ENCODE measurements at regions of chr9 and their contacts with region 1.

Region 1: GRCh38 chr9:120985810-120986222 is 59.2 kb upstream of the TRAF1 start:
- DNase-seq: peak; percentile 38
- H3K4me3 ChIP-seq: no peak overlapping the region
- H3K27ac ChIP-seq: no peak overlapping the region
- H3K27me3 ChIP-seq: no peaks in the 10 kb centered on the region
- CTCF ChIP-seq: peak; percentile 70

Region 2: GRCh38 chr9:120832807-120833206 is 153.0 kb before region 1 on chr9:
- CTCF ChIA-PET with region 1: no interaction called
- POLR2A ChIA-PET with region 1: no interaction called
- DNase-seq: no peak
- H3K4me3 ChIP-seq: no peak overlapping the region
- H3K27ac ChIP-seq: no peak overlapping the region
- H3K27me3 ChIP-seq: no peaks in the 10 kb centered on the region
- CTCF ChIP-seq: no peak

Region 3: GRCh38 chr9:120965344-120966012 is 20.3 kb before region 1 on chr9:
- CTCF ChIA-PET with region 1: interaction called, 17 read pairs
- POLR2A ChIA-PET with region 1: no interaction called
- DNase-seq: no peak
- H3K4me3 ChIP-seq: no peak overlapping the region
- H3K27ac ChIP-seq: no peak overlapping the region
- H3K27me3 ChIP-seq: no peaks in the 10 kb centered on the region
- CTCF ChIP-seq: no peak

Region 4: DNA sequence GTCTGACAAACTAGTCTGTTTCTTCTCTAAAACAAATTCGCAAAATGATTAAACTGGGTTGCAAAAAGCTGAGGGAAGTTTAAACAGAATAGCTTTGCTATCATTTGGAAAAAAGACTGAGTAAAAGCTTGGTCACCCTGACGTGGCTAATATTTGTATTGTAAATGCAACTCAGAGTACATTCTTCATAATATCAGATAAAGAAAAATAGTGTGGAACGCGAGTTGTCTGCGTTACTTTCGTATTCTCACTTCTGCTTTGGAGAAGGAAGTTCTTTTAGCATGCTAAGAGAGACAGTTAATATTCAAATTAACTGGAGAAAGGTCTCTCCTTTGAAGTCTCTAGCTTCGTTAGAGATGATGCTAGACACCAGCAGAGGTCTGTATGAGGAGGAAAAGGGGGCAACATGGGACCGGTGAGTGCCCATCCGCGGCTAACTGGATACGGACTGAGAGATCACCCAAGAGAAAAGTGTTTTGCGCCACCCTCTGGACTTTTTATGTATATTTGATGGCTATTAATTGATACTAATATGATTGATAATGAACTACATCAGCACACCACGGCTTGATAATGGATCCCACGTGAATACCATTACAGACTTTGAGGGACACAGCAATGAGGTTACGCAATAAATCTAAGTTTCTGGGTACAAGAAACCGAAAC is 86.1 kb after region 1 on chr9:
- CTCF ChIA-PET with region 1: interaction called, 30 read pairs
- POLR2A ChIA-PET with region 1: no interaction called
- DNase-seq: no peak
- H3K4me3 ChIP-seq: peak overlapping the region; percentile 56
- H3K27ac ChIP-seq: peak overlapping the region; percentile 39
- H3K27me3 ChIP-seq: no peaks in the 10 kb centered on the region
- CTCF ChIP-seq: peak; percentile 44